A549 (cell line): ENCODE measurements at regions of chr3 and their contacts with region 1.

Region 1: DNA sequence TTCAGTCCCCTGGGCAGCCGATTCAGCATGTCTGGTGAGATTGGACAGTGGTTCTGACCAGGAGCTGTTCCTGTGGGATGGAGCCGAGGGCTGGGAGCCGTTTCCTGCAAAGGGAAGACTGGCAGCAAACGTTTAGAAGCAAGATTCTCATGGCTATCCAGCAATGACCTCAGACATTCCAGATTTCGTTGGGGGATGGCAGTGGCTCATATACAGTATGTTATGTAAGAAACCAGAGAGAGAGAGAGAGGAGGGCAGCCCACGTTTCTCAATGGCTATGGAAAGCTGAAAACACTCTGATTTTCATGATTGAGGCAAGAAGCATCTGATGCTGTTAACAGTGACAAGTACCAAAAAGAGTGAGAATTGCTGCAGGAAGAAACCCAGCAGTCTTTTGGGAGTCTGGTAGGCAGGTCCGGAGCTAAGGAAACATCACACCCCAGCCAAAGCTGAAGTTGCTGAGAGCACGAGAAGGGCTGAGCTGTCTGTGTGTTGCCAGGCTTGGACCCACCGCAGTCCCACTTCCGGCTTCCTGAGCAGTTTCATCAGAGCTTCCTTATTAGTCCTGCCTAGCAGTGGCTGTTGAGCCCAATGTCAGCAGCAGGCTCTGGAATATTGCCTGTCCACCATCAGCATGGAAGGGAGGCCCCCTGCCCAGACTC is 25.6 kb upstream of the VPS8 start:
- DNase-seq: no peak
- ATAC-seq: 0 out of 6 replicates have a peak, but pooled peaks of 1 of the 2 experiments have one; percentile 24
- H3K4me3 ChIP-seq: no peak overlapping the region
- H3K27ac ChIP-seq: no peak overlapping the region
- H3K4me1 ChIP-seq: no peaks in the 10 kb centered on the region
- CTCF ChIP-seq: no peak
- EP300 ChIP-seq: no peak
- POLR2A ChIP-seq: no peak
- RAD21 ChIP-seq: no peak

Region 2: DNA sequence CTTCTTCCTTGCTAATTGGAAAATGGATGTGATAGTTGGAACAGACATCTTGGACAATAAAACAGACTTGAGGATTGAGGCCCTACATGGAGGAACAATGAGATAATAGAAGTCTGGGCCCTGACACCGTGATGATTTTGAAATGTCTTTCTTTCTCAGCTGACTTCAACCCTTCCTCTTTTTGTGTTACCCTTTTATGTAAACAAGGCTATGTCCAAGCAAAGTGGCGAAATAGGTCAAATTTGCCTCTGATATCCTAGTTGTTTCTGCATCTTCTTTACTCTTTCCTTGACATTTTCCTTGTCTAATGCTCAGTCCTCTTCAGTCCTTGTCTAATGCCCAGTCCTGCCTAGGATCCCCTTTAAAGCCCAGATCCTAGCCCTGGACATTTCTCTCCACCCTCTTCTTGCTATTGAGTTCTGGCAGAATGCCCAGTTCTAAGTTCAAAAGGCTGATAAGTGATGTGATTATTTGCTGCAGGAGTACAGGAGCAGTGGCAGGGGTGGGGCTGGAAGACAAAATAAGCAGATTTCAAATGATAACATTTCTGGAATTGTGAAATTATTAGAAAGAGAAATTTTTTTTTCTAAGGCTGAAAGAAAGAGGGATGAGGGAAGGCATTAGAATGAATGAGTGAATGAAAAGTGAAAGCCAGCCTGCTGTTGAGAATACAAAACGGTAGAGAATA is 19.1 kb after region 1 on chr3:
- CTCF ChIA-PET with region 1: interaction called, 16 read pairs
- POLR2A ChIA-PET with region 1: no interaction called
- DNase-seq: no peak
- ATAC-seq: no peak
- H3K4me3 ChIP-seq: no peak overlapping the region
- H3K27ac ChIP-seq: no peak overlapping the region
- H3K4me1 ChIP-seq: peaks cover 10% of the 10 kb centered on the region
- CTCF ChIP-seq: no peak
- EP300 ChIP-seq: no peak
- POLR2A ChIP-seq: no peak
- RAD21 ChIP-seq: no peak

Region 3: DNA sequence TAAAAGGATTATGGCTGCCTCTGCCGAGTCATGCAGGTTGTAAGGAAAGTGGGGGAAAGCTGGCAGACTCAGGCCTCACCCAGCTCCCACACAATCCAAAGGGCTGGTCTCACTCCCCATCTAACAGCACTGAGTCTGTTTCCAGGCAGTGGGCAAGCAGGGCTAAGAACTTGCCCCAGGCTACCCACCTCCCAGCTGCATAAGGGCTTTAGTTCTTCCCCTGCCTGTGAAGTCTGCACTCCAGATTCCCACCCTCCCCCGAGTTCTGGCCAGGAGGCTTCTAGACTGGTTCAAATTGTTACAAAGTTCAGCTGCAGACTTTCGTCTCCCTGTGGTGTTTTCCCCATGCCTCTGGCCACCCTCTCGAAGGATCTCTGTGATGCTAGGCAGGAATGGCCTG is 456.2 kb after region 1 on chr3:
- CTCF ChIA-PET with region 1: no interaction called
- POLR2A ChIA-PET with region 1: no interaction called
- DNase-seq: no peak
- ATAC-seq: no peak
- H3K4me3 ChIP-seq: no peak overlapping the region
- H3K27ac ChIP-seq: no peak overlapping the region
- H3K4me1 ChIP-seq: no peaks in the 10 kb centered on the region
- CTCF ChIP-seq: no peak
- EP300 ChIP-seq: no peak
- POLR2A ChIP-seq: no peak
- RAD21 ChIP-seq: no peak